Common myeloid progenitor, CD34-positive (primary cell): ENCODE measurements at regions of chr15 and their contacts with region 1.

Region 1: GRCh38 chr15:64841258-64842095 is at the start of gene PLEKHO2:
- DNase-seq: peak; percentile 95 to 99 (median 98)
- H3K4me3 ChIP-seq: peak within 1 kb of the TSS; percentile 71 to 99 (median 90)
- H3K27ac ChIP-seq: peak within 1 kb of the TSS; percentile 74 to 86
- H3K4me1 ChIP-seq: peaks cover 18 to 86% (median 62%) of the 10 kb centered on the region in 4 experiments
- H3K27me3 ChIP-seq: no peaks in the 10 kb centered on the region

Region 2: GRCh38 chr15:64622410-64623260 is 218.8 kb before region 1 on chr15:
- CTCF ChIA-PET with region 1: no interaction called
- POLR2A ChIA-PET with region 1: no interaction called
- DNase-seq: peak; percentile 39 to 90 (median 86)
- H3K4me3 ChIP-seq: peak overlapping the region in 3 of 7 experiments; percentile 22 to 45 (median 26)
- H3K27ac ChIP-seq: peak overlapping the region in 1 of 2 experiments; percentile 18
- H3K4me1 ChIP-seq: peaks cover 27 to 69% (median 61%) of the 10 kb centered on the region in 4 experiments
- H3K27me3 ChIP-seq: no peaks in the 10 kb centered on the region

Region 3: GRCh38 chr15:64665179-64665578 is 176.3 kb before region 1 on chr15:
- CTCF ChIA-PET with region 1: no interaction called
- POLR2A ChIA-PET with region 1: no interaction called
- DNase-seq: no peak
- H3K4me3 ChIP-seq: no peak overlapping the region
- H3K27ac ChIP-seq: no peak overlapping the region
- H3K4me1 ChIP-seq: peaks cover 0 to 11% (median 4%) of the 10 kb centered on the region in 4 experiments
- H3K27me3 ChIP-seq: no peaks in the 10 kb centered on the region

Region 4: DNA sequence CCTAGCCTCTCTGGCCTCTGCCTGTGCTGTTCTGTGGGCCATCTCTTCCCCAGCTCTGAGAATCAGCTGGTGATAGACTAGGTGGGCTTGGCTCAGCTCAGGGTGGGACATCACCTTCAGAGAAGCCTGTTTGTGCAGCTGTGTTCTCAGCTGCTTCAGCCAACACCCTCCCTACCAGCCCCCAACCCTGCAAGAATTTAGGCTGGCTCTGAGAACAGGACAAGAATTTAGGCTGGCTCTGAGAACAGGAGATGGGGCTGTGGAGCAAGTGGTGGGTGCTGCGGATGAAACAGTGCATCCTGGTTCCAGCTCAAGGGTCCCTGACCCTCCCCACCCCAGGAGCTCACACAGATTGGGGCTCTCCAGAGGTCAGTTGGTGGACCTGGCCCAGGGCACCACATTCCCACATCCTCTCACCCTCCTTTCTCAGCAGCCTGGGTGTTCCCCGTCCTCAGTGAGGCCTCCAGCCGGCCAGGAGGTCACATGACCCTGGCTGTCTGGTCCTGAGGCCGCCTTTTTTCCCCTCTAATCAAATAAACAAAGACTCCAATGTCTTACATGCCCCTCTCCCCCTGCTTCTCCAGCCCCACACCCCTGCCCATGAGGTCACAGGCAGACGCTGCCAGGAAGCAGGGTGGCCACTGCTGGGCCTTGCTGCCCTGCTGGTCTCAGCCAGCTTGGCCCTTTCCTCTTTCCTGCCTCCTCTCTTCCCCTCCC is 15.1 kb after region 1 on chr15:
- CTCF ChIA-PET with region 1: interaction called, 15 read pairs
- POLR2A ChIA-PET with region 1: interaction called, 6 read pairs
- DNase-seq: no peak
- H3K4me3 ChIP-seq: peak overlapping the region in 2 of 7 experiments; percentile 4 to 8
- H3K27ac ChIP-seq: peak overlapping the region in 1 of 2 experiments; percentile 39
- H3K4me1 ChIP-seq: peaks cover 0 to 41% (median 36%) of the 10 kb centered on the region in 4 experiments
- H3K27me3 ChIP-seq: no peaks in the 10 kb centered on the region

Region 5: GRCh38 chr15:64883997-64884511 is 42.6 kb after region 1 on chr15:
- CTCF ChIA-PET with region 1: interaction called, 11 read pairs
- POLR2A ChIA-PET with region 1: interaction called, 7 read pairs
- DNase-seq: peak; percentile 77 to 95 (median 94)
- H3K4me3 ChIP-seq: peak overlapping the region in 1 of 7 experiments; percentile 2
- H3K27ac ChIP-seq: peak overlapping the region; percentile 16 to 63
- H3K4me1 ChIP-seq: peaks cover 16 to 42% (median 36%) of the 10 kb centered on the region in 4 experiments
- H3K27me3 ChIP-seq: no peaks in the 10 kb centered on the region

Region 6: DNA sequence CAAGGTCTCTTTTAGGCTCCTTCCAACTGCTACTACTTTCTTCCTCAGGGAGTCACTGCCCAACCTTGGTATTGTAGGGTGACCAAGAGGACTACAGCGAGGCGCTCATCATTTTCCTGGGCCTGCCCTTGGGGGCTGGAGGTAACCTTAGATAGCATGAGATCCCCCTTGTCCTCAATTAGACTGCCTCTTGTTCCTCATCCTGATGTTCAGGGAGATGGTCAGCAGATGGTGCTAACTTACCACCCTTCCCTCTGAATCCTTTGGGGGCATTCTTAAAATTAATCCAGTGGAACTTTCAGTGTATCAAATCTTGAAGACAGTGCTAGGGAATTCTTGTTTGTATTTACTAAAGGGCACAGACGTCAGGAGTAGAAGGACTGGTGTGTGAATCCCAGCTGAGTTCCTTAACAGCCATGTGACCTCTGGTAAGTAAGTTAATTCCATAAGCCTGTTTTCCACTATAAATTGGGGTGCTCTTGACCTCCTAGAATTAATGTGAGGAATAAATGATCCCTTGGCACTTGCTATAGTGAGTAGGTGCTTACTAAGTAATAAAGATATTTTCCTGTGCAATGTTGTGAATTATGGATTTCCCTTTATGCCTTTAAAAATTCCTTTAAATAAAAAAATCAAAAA is 347.7 kb after region 1 on chr15:
- CTCF ChIA-PET with region 1: no interaction called
- POLR2A ChIA-PET with region 1: no interaction called
- DNase-seq: peak; percentile 74 to 87 (median 82)
- H3K4me3 ChIP-seq: no peak overlapping the region
- H3K27ac ChIP-seq: no peak overlapping the region
- H3K4me1 ChIP-seq: peaks cover 2 to 6% (median 5%) of the 10 kb centered on the region in 4 experiments
- H3K27me3 ChIP-seq: no peaks in the 10 kb centered on the region